CD8-positive, alpha-beta memory T cell (primary cell): ENCODE measurements at regions of chr9 and their contacts with region 1.

Region 1: DNA sequence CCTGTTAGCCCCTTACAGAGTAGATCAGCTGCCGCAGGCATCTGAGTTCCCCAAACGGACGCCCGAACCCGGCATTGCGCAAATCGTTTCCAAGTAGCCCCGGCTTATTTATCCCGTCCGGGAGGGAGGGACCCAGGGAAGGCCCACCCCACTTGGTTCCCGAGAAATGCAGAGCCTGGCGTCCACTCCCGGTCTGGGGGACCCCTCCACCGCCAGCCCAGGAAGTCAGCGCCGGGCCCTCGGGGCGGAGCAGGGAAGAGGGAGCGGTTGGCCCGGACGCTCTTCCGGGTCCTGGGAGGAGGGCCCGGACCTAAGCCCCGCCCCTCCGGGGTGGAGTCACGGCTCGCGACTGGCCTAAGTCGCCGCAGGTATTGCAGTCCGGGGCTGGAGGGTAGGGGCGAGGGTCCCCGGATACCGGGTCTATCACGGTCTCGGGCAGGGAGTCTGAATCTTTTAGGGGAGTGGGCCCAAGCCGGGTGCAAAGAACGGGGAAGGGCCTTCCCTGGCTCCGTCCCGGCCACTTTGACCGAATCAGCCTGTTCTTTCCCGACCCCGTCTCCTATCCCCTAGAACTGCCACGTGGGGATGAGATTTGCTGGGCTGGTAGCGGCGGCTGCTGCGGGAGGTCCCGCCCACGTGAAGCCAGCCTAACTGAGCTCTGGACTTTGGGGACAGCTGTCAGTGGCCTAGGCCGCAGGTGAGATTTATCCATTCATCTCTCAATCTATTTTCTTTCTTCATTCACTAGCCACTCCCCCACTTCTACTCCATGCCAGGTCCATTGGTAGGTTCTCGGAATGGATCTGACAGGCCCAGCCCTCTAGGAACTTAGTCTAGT is at the start of gene RABEPK:
- DNase-seq: peak; percentile 84 to 92 (median 88)
- H3K4me3 ChIP-seq: peak within 1 kb of the TSS; percentile 80
- H3K4me3 Mint-ChIP-seq: peak within 1 kb of the TSS; percentile 91 to 98 (median 93)
- H3K27ac ChIP-seq: peak within 1 kb of the TSS; percentile 83
- H3K27ac Mint-ChIP-seq: peak within 1 kb of the TSS; percentile 89 to 98 (median 94)
- H3K4me1 ChIP-seq: peaks cover 32% of the 10 kb centered on the region
- H3K4me1 Mint-ChIP-seq: peaks cover 34 to 41% (median 40%) of the 10 kb centered on the region in 3 donors
- H3K27me3 ChIP-seq: no peaks in the 10 kb centered on the region
- H3K27me3 Mint-ChIP-seq: no peaks in the 10 kb centered on the region
- total RNA-seq, gene RABEPK: 39.6 to 40.1 TPM

Region 2: GRCh38 chr9:125189361-125190289 is 10.8 kb before region 1 on chr9 and contains the start of gene PPP6C:
- CTCF ChIA-PET with region 1: interaction called, 7 read pairs
- POLR2A ChIA-PET with region 1: interaction called, 10 read pairs
- DNase-seq: peak; percentile 96 to 98 (median 97)
- H3K4me3 ChIP-seq: peak within 1 kb of the TSS; percentile 98
- H3K4me3 Mint-ChIP-seq: peak within 1 kb of the TSS; percentile 94 to 98 (median 97)
- H3K27ac ChIP-seq: peak within 1 kb of the TSS; percentile 97
- H3K27ac Mint-ChIP-seq: peak within 1 kb of the TSS; percentile 89 to 99 (median 96)
- H3K4me1 ChIP-seq: peaks cover 64% of the 10 kb centered on the region
- H3K4me1 Mint-ChIP-seq: peaks cover 41 to 84% (median 71%) of the 10 kb centered on the region in 3 donors
- H3K27me3 ChIP-seq: no peaks in the 10 kb centered on the region
- H3K27me3 Mint-ChIP-seq: no peaks in the 10 kb centered on the region
- total RNA-seq, gene PPP6C: 48.9 to 50.5 TPM

Region 3: DNA sequence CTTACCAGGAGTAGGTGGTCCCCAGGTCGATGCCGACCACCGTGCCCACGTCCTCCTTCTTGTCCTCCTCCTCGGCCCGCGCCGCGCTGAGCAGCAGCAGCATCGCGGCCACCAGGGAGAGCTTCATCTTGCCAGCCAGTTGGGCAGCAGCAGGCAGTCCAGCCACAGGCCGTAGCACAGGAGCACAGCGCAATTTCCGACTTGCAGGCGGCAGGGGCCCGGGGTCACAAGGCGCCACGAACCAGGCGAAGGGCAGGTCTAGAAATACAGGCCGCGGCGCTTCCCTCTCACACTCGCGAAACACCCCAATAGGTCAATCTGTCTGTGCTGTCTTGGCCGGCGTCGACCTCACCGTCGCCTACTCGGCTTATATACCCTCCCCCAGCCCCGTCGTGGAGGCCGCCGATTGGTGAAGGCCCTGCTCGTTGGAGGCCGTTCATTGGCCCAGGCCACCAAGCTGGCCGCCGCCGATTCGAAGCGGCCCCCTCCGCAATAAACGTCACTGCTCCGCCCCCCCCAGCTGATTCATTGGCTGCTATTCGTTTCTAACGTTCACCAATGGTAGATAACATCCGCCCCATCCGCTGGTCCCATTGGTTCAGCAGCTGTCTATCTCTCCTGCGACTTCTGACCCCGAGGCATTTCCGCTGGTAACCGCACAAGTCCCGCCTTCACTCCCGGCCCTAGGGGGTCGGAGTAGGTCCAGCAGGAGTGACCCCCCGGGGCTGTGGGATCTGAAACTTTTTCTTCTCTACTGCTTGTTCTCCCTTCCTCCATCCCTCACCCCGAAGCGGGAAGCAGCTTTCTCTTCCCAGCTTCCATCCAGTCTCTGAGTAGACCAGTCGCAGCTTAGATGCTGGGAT is 40.8 kb after region 1 on chr9 and contains the start of gene HSPA5:
- CTCF ChIA-PET with region 1: interaction called, 3 read pairs
- POLR2A ChIA-PET with region 1: interaction called, 29 read pairs
- DNase-seq: peak; percentile 99 to 100 (median 99)
- H3K4me3 ChIP-seq: peak within 1 kb of the TSS; percentile 96
- H3K4me3 Mint-ChIP-seq: peak within 1 kb of the TSS; percentile 92 to 99 (median 95)
- H3K27ac ChIP-seq: peak within 1 kb of the TSS; percentile 99
- H3K27ac Mint-ChIP-seq: peak within 1 kb of the TSS; percentile 97 to 100 (median 99)
- H3K4me1 ChIP-seq: peaks cover 51% of the 10 kb centered on the region
- H3K4me1 Mint-ChIP-seq: peaks cover 46 to 53% (median 48%) of the 10 kb centered on the region in 3 donors
- H3K27me3 ChIP-seq: no peaks in the 10 kb centered on the region
- H3K27me3 Mint-ChIP-seq: peaks cover 0 to 13% of the 10 kb centered on the region in 2 donors
- total RNA-seq, gene HSPA5: 229 to 237 TPM

Region 4: DNA sequence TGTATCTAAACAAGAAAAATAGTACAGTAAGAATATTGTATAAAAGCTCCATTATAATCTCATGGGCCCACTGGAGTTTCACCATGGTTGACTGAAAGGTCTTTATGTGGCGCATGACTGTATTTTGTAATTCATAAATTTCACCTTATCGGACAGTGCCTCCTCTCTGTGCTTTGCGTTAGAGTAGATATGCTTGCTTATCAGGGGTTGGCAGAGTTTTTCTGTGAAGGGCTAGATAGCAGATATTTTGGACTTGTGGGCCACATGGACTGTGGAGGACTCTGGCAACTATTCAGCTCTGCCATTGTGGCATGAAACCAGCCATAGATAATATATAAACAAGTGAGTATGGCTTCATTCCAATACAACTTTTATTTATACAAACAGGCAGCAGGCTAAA is 84.4 kb after region 1 on chr9:
- CTCF ChIA-PET with region 1: no interaction called
- POLR2A ChIA-PET with region 1: interaction called, 12 read pairs
- DNase-seq: no peak
- H3K4me3 ChIP-seq: no peak overlapping the region
- H3K4me3 Mint-ChIP-seq: no peak overlapping the region
- H3K27ac ChIP-seq: peak overlapping the region; percentile 33
- H3K27ac Mint-ChIP-seq: no peak overlapping the region
- H3K4me1 ChIP-seq: no peaks in the 10 kb centered on the region
- H3K4me1 Mint-ChIP-seq: peaks cover 17 to 25% (median 23%) of the 10 kb centered on the region in 3 donors
- H3K27me3 ChIP-seq: no peaks in the 10 kb centered on the region
- H3K27me3 Mint-ChIP-seq: no peaks in the 10 kb centered on the region